ENCODE measurements at regions of chr11 and their contacts with region 1.

Region 1: GRCh38 chr11:18615628-18616392 is 16.2 kb downstream of the MISFA start:
- DNase-seq: no peak
- H3K4me3 Mint-ChIP-seq: no peak overlapping the region
- H3K27ac Mint-ChIP-seq: peak overlapping the region; percentile 6
- H3K4me1 Mint-ChIP-seq: peaks cover 48% of the 10 kb centered on the region
- H3K27me3 Mint-ChIP-seq: no peaks in the 10 kb centered on the region

Region 2: DNA sequence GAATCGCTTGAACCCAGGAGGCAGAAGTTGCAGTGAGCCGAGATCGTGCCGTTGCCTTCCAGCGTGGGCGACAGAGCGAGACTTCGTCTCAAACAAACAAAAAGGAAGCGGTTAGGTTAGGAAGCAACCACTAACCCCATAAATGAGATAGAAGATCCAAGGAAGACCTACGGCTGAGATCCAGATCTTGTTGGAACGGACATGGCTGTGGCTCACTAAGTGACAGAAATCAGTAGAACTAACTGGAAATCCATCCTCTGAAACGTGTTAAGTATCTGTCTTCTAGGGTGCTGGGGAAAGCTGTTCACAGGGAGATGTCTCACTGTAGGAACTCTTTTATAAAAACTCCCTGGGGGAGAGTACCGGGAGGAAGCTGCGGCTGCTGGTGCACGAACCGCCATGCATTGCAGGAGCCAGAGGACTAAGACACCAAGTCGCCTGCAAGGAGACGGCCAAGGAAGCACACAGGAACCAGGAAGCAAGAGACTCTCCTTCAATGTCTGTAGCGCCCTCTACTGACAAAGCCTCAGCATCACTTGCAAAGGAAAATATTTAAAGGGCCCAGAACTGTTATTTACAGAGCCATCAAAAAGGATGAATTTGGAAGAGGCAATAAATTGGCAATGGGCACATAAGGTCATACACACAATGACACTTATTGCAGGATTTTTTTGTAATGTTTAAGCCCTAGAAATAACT is 35.2 kb after region 1 on chr11:
- CTCF ChIA-PET with region 1: interaction called, 15 read pairs
- DNase-seq: peak; percentile 63
- H3K4me3 Mint-ChIP-seq: no peak overlapping the region
- H3K27ac Mint-ChIP-seq: peak overlapping the region; percentile 34
- H3K4me1 Mint-ChIP-seq: peaks cover 10% of the 10 kb centered on the region
- H3K27me3 Mint-ChIP-seq: peaks cover 11% of the 10 kb centered on the region

Region 3: DNA sequence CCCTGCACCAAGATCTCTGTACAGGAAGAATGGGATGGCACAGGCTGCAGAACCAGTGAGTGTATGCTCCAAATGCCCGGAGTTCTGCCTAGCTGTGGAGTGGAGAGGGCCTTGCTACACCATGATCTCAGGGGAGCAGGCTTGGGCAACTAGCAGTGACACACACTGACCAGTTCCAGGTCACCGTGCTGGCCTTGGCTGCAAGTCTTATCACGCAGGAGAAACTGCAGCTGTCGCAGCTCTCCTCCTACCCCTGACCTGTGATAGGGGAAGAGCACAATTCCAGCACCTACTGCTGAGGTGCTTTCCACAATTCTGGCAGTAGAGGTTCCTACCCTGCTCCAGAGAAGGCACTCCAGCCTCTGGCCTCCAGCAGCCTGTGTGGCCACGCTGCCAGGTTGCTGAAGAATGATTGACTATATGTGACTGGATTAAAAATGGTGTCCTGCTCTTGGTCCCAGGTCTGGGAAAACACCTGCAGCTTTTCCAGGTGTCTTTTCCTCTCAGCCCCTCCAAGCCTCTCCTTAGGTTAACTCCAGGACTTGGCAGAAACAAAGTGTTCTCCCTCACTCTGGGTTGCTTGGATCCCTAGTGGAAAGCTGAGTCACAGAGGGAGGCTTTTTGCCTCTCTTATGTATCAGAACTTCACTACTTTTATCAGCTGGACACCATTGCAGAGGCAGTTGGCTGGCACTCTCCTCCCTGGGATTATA is 219.1 kb after region 1 on chr11:
- CTCF ChIA-PET with region 1: no interaction called
- DNase-seq: no peak
- H3K4me3 Mint-ChIP-seq: no peak overlapping the region
- H3K27ac Mint-ChIP-seq: no peak overlapping the region
- H3K4me1 Mint-ChIP-seq: no peaks in the 10 kb centered on the region
- H3K27me3 Mint-ChIP-seq: peaks cover 29% of the 10 kb centered on the region